ENCODE measurements at regions of chr2 and their contacts with region 1.

Region 1: DNA sequence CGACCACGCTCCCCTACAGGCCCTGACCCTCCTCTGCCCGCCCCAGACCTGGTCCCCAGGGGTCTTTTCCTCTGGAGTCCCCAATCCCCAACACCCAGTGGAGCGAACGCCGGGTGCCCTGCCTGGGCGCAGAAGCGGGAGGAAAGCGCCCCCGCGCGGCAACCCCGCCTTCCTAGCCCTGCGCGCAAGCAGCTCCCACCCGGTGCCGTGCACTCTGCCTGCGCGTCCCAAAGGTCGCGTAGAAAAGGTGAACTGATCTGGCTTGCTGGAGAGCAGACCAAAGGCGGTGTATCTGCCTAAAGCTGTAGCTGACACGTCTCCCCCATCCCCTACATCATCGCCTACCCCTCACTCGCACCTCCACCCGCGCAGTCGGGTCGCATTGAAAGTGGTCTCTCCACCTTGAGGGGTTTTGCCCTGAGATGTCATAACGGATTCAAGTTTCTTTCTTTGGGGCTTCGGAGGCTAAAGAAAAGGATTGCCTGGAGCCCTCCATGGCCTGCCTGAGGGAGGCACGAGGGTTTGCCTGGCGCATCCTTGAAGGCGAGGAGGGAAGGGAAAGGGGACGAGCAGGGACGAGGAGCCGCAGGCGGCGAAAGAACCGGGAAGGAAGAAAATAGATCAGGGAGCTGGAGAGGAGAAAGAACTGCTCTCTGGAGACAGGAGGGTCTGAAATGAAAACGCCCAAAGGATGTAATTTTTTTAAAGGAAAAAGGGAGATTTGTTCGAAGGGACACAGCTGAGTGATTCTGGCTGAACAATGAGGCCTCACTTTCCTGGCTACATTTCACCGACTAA is 5.8 kb downstream of the GAD1 start:
- DNase-seq: peak in 1 of 5 donors; percentile 51
- H3K4me3 ChIP-seq: no peak overlapping the region
- H3K4me3 Mint-ChIP-seq: peak overlapping the region; percentile 44 to 94 (median 82)
- H3K27ac ChIP-seq: no peak overlapping the region
- H3K27ac Mint-ChIP-seq: peak overlapping the region in 2 of 8 donors; percentile 36 to 68
- H3K4me1 ChIP-seq: peaks cover 56% of the 10 kb centered on the region
- H3K4me1 Mint-ChIP-seq: peaks cover 45 to 60% (median 54%) of the 10 kb centered on the region in 3 donors
- H3K27me3 ChIP-seq: peaks cover 52% of the 10 kb centered on the region
- H3K27me3 Mint-ChIP-seq: peaks cover 80 to 83% of the 10 kb centered on the region in 2 donors

Region 2: GRCh38 chr2:170409164-170409535 is 413.3 kb before region 1 on chr2:
- CTCF ChIA-PET with region 1: interaction called, 21 read pairs
- POLR2A ChIA-PET with region 1: no interaction called
- DNase-seq: peak; percentile 49 to 76 (median 62)
- H3K4me3 ChIP-seq: no peak overlapping the region
- H3K4me3 Mint-ChIP-seq: peak overlapping the region in 6 of 7 donors; percentile 46 to 75 (median 68)
- H3K27ac ChIP-seq: no peak overlapping the region
- H3K27ac Mint-ChIP-seq: no peak overlapping the region
- H3K4me1 ChIP-seq: no peaks in the 10 kb centered on the region
- H3K4me1 Mint-ChIP-seq: peaks cover 13 to 33% (median 24%) of the 10 kb centered on the region in 3 donors
- H3K27me3 ChIP-seq: no peaks in the 10 kb centered on the region
- H3K27me3 Mint-ChIP-seq: peaks cover 3 to 27% of the 10 kb centered on the region in 2 donors

Region 3: DNA sequence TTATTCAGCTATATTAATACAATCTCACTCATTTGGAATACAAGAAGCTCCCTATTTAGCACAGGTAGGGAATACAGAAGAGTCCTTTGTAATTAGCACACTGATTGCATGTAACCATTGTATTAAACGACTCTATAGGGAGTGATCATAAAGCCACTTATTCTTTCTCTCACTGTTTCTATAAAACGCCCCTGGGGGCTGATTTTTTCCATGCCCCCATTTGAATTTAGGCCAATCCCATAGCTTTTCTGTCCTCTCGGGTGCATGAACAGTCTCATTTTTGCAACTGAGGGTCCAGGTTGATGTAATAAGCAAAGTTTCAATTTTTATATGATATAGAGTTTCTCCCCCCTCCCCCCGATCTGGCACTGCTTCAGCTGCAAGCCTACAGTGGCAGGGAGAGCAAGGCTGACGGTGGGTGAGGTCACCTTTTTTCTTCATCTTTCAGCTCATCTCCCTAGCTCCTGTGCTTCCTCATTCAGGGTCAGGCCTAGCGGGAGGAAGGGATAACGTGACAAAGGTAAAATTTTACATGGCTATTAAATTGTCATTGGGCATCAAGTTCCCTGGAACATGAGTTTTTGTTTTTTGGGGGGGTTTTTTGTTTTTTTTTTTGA is 39.9 kb after region 1 on chr2:
- CTCF ChIA-PET with region 1: no interaction called
- POLR2A ChIA-PET with region 1: no interaction called
- DNase-seq: no peak
- H3K4me3 ChIP-seq: no peak overlapping the region
- H3K4me3 Mint-ChIP-seq: no peak overlapping the region
- H3K27ac ChIP-seq: no peak overlapping the region
- H3K27ac Mint-ChIP-seq: no peak overlapping the region
- H3K4me1 ChIP-seq: no peaks in the 10 kb centered on the region
- H3K4me1 Mint-ChIP-seq: no peaks in the 10 kb centered on the region
- H3K27me3 ChIP-seq: no peaks in the 10 kb centered on the region
- H3K27me3 Mint-ChIP-seq: peaks cover 0 to 19% of the 10 kb centered on the region in 2 donors

Measured in CD8-positive, alpha-beta memory T cell (primary cell).